Aorta (tissue), 5 donors: ENCODE measurements at regions of chrX and their contacts with region 1.

Region 1: GRCh38 chrX:39730662-39731397 is 366.9 kb downstream of the BCOR start:
- DNase-seq: peak; percentile 84 to 88
- ATAC-seq: peak; percentile 84
- H3K4me3 ChIP-seq: no peak overlapping the region
- H3K27ac ChIP-seq: peak overlapping the region in 1 of 2 donors; percentile 81
- H3K4me1 ChIP-seq: peaks cover 0 to under 1% of the 10 kb centered on the region in 2 donors
- H3K27me3 ChIP-seq: no peaks in the 10 kb centered on the region

Region 2: GRCh38 chrX:39645178-39645895 is 85.5 kb before region 1 on chrX:
- intact Hi-C with region 1: loop called in 1 of 2 experiments (anchors 10 kb)
- DNase-seq: peak; percentile 90 to 91
- ATAC-seq: peak; percentile 83
- H3K4me3 ChIP-seq: no peak overlapping the region
- H3K27ac ChIP-seq: peak overlapping the region in 1 of 2 donors; percentile 80
- H3K4me1 ChIP-seq: no peaks in the 10 kb centered on the region
- H3K27me3 ChIP-seq: no peaks in the 10 kb centered on the region

Region 3: DNA sequence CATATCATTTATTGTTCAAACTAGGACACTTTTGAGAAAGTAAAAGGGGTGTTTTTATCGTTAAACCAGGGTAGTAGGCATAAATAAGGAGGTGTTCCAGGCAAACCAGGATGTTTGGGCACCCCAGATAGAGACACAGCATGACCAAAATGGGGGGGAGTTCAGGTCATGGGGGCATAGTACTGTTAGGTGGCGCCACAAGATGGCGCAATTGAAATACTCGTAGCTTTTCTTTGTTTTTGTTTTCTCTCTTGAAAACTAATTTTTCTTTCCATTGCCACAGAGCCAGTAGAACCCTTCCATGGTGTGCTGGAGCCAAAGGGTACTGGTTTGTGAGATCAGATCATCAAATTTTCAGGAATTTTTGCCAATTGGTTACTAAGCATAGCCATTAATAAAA is 83.6 kb after region 1 on chrX:
- intact Hi-C with region 1: loop called (anchors 5 to 10 kb)
- DNase-seq: no peak
- ATAC-seq: no peak
- H3K4me3 ChIP-seq: no peak overlapping the region
- H3K27ac ChIP-seq: no peak overlapping the region
- H3K4me1 ChIP-seq: no peaks in the 10 kb centered on the region
- H3K27me3 ChIP-seq: no peaks in the 10 kb centered on the region

Region 4: DNA sequence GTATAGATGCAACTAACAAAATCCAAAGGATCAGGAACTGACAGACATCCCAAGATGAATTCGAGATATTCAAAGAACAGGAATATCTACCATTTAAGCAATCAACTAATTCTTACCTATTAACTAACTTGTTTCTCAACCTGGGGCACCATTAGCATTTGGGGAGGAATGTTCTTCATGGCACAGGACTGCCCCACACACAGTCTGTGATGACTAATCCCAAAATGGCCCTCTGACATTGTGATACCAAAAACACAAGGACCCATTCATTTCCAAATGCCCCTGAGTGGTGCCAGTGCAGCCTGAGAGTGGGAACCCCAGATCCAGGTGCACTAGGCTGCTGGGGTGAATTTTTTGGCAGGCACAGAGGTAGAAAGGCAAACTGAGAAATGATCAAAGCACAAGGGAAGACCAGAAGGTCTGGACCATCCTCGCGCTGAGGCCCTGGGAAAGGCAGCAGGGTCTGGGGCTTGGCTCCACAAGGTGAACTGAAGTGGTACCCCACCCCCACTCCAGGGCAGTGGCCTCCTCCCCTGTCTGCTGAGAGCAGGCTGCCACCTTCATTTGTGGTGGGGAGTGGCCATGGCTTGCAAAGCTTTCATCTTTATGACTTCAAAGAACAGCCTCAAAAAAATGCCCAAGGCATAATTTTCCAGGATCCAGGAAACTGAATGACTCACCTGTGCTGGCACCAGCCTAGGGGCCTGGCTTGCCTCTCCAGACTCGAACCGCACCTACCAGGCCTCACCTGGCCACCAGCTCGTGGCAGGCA is 244.4 kb after region 1 on chrX:
- intact Hi-C with region 1: no loop called
- DNase-seq: no peak
- ATAC-seq: no peak
- H3K4me3 ChIP-seq: no peak overlapping the region
- H3K27ac ChIP-seq: no peak overlapping the region
- H3K4me1 ChIP-seq: no peaks in the 10 kb centered on the region
- H3K27me3 ChIP-seq: no peaks in the 10 kb centered on the region

Region 5: GRCh38 chrX:40083120-40083978 is 352.5 kb after region 1 on chrX:
- intact Hi-C with region 1: loop called (anchors 5 to 10 kb)
- DNase-seq: peak in 1 of 2 donors; percentile 81
- ATAC-seq: peak; percentile 51
- H3K4me3 ChIP-seq: no peak overlapping the region
- H3K27ac ChIP-seq: no peak overlapping the region
- H3K4me1 ChIP-seq: no peaks in the 10 kb centered on the region
- H3K27me3 ChIP-seq: no peaks in the 10 kb centered on the region

Region 6: DNA sequence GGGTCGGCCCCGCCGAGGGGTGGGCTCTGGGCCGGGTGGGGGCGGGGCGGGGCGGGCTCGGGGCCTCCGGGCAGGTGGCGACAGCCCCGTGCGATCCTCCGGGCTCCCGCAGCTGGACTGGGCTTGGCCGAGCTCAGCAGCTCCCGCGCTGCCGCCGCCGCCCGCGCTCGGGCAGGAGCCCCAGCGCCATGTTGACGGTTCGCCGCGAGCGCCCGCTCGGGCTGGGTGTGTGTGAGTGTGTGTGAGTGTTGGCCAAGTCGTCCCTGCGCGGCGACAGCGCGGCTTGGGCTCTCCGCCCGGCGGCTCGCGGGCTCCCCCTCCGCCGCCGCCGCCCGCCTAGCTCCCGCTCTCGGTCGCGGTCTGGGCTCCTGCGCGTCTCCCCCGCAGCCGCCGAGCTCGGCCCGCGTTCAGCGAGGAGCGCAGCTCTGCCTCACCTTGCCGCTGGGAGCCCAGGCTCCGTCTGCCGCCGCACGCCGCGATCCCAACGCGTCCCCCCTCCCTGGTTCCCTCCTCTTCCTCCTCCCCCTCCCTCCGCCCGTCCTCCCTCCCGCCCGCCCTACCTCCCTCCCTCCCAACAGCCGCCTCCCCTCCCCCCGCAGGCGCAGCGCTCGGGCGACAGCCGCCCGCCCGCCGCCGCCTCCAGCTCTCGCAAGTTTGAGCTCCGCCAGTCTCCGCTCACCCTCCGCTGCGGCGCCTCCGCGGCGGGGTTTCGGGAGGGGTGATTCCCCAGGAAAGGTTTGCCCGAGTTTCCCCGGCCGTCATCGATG is 366.9 kb after region 1 on chrX and contains the start of gene BCOR:
- intact Hi-C with region 1: no loop called
- DNase-seq: peak; percentile 86 to 91
- ATAC-seq: peak; percentile 58
- H3K4me3 ChIP-seq: peak within 1 kb of the TSS; percentile 55 to 86
- H3K27ac ChIP-seq: peak within 1 kb of the TSS; percentile 30 to 87
- H3K4me1 ChIP-seq: no peaks in the 10 kb centered on the region
- H3K27me3 ChIP-seq: peaks cover 0 to 2% of the 10 kb centered on the region in 2 donors
- total RNA-seq, gene BCOR: 22.6 to 46.7 TPM

Region 7: GRCh38 chrX:40266490-40267333 is 535.9 kb after region 1 on chrX:
- intact Hi-C with region 1: loop called (anchors 5 kb)
- DNase-seq: peak; percentile 75 to 88
- ATAC-seq: peak; percentile 88
- H3K4me3 ChIP-seq: peak overlapping the region in 1 of 2 donors; percentile 75
- H3K27ac ChIP-seq: peak overlapping the region; percentile 2 to 87
- H3K4me1 ChIP-seq: no peaks in the 10 kb centered on the region
- H3K27me3 ChIP-seq: no peaks in the 10 kb centered on the region